Endothelial cell of umbilical vein (primary cell): ENCODE measurements at regions of chr19 and their contacts with region 1.

Region 1: GRCh38 chr19:10269333-10270179 is 1.4 kb upstream of the ICAM1 start:
- DNase-seq: peak; percentile 90
- H3K4me3 ChIP-seq: no peak overlapping the region
- H3K27ac ChIP-seq: peak overlapping the region; percentile 73
- H3K4me1 ChIP-seq: peaks cover 36% of the 10 kb centered on the region
- H3K27me3 ChIP-seq: no peaks in the 10 kb centered on the region
- CTCF ChIP-seq: peak; percentile 88 to 93
- POLR2A ChIP-seq: no peak

Region 2: DNA sequence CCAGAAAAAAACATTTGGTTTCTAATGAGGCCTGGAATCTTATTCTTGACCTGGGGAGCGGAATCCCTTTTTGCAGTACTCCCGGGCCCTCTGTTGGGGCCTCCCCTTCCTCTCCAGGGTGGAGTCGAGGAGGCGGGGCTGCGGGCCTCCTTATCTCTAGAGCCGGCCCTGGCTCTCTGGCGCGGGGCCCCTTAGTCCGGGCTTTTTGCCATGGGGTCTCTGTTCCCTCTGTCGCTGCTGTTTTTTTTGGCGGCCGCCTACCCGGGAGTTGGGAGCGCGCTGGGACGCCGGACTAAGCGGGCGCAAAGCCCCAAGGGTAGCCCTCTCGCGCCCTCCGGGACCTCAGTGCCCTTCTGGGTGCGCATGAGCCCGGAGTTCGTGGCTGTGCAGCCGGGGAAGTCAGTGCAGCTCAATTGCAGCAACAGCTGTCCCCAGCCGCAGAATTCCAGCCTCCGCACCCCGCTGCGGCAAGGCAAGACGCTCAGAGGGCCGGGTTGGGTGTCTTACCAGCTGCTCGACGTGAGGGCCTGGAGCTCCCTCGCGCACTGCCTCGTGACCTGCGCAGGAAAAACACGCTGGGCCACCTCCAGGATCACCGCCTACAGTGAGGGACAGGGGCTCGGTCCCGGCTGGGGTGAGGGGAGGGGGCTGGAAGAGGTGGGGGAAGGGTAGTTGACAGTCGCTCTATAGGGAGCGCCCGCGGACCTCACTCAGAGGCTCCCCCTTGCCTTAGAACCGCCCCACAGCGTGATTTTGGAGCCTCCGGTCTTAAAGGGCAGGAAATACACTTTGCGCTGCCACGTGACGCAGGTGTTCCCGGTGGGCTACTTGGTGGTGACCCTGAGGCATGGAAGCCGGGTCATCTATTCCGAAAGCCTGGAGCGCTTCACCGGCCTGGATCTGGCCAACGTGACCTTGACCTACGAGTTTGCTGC is 17.5 kb after region 1 on chr19 and contains the start of gene ICAM4:
- CTCF ChIA-PET with region 1: interaction called, 29 read pairs
- POLR2A ChIA-PET with region 1: interaction called, 15 read pairs
- dilution Hi-C with region 1: no loop called
- intact Hi-C with region 1: loop called (anchors 2 kb)
- DNase-seq: peak; percentile 49
- H3K4me3 ChIP-seq: no peak within 1 kb of the TSS
- H3K27ac ChIP-seq: no peak within 1 kb of the TSS
- H3K4me1 ChIP-seq: peaks cover 27% of the 10 kb centered on the region
- H3K27me3 ChIP-seq: peaks cover 18 to 30% of the 10 kb centered on the region in 2 experiments
- CTCF ChIP-seq: no peak
- POLR2A ChIP-seq: no peak
- total RNA-seq, gene ICAM4: 0.49 TPM in 1 of 2 replicates, not detected in the other

Region 3: DNA sequence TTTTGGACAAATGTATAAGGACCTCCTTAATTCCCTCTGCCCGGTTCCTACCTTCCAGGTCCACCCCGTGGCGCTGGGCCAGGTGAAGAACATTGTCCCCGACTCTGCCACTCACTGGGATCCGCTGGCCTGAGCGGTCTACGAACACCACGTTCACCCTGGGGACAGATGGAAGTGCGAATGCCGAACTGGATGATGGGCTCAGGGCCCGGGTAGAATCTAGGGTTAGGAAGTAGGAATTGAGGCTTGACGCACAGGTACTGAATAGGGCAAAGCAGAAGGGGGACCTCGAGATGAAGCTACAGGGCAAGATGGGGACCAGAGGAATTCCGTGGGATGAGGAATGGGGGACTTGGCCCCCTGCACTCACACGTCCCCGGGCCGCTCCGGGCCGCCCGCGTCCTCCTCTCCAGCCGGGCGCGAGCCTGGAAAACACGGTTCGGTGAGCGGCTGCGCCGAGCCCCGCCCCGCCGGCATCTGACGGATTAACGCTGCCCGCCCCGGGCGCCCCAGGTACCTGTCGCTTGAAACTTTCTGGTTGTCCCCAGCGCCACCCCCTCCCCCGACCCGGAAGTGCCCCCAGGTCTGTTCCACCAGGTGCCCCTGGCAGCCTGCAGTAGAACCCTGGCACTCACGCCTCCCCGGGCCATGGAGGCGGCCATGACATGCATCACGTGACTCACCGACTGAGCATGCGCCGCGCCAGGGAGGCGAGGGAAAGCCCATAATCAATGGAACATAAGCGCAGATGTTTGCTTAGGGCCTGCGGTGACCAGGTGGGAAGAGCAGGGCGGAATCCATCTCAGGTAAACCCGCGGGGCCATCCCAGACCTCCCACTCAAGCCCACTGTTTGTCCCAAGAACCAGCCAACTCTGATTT is 46.0 kb after region 1 on chr19 and contains the start of gene FDX2:
- CTCF ChIA-PET with region 1: interaction called, 12 read pairs
- POLR2A ChIA-PET with region 1: no interaction called
- dilution Hi-C with region 1: no loop called
- intact Hi-C with region 1: loop called (anchors 5 kb)
- DNase-seq: peak; percentile 85
- H3K4me3 ChIP-seq: peak within 1 kb of the TSS; percentile 48 to 67 (median 51)
- H3K27ac ChIP-seq: no peak within 1 kb of the TSS
- H3K4me1 ChIP-seq: no peaks in the 10 kb centered on the region
- H3K27me3 ChIP-seq: no peaks in the 10 kb centered on the region
- CTCF ChIP-seq: no peak
- POLR2A ChIP-seq: peak; percentile 96
- total RNA-seq, gene FDX2: 20.5 and 22.4 TPM in 2 replicates

Region 4: DNA sequence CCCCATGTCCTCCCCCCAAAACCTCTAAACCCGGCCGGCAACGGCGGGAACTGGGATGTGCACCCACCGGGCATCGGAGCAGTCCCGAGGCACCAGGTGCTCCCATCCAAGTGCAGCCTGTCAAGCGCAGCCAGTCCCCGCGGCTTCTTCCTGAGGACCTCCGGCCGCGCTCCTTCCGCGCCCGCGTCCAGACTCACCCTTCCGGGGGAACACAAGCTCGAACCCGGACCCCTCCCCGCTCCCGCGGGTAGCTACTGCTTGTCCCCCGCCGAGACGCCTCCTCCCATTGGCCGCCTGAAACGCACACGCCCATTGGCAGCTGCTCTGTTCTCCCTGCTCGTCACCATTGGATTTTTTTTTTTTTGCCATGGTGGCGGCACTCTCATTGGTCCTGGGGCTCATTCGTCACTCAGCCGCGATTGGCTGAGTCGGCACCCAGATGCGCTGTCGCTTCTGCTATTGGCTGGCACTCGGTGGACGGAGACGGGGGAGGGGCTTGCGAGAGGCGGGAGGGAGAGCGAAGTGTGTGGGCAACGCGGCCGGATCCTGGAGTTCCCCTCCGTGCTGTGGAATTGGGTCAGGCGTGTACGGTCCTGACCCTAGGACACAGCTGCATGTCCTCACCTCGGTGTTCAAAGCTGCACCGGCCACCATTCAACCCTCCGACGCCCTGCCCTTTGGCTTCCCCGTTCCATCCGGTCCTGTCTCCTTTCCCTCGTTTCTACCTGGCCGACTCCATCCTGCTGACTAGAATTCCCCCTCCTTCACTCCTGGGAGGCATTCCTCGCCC is 111.0 kb after region 1 on chr19 and contains the start of gene TYK2:
- CTCF ChIA-PET with region 1: interaction called, 35 read pairs
- POLR2A ChIA-PET with region 1: no interaction called
- dilution Hi-C with region 1: no loop called
- intact Hi-C with region 1: loop called (anchors 2 kb)
- DNase-seq: peak; percentile 99
- H3K4me3 ChIP-seq: peak within 1 kb of the TSS; percentile 78 to 96 (median 89)
- H3K27ac ChIP-seq: peak within 1 kb of the TSS; percentile 10
- H3K4me1 ChIP-seq: peaks cover 12% of the 10 kb centered on the region
- H3K27me3 ChIP-seq: no peaks in the 10 kb centered on the region
- CTCF ChIP-seq: no peak
- POLR2A ChIP-seq: peak; percentile 90
- total RNA-seq, gene TYK2: 138 and 142 TPM in 2 replicates